ENCODE measurements at regions of chr1 and their contacts with region 1.

Region 1: GRCh38 chr1:56301847-56302246 is 277.5 kb downstream of the PLPP3 start:
- DNase-seq: peak; percentile 93
- H3K4me3 ChIP-seq: no peak overlapping the region
- H3K27ac ChIP-seq: no peak overlapping the region
- H3K4me1 ChIP-seq: peaks cover 17% of the 10 kb centered on the region
- H3K27me3 ChIP-seq: no peaks in the 10 kb centered on the region
- CTCF ChIP-seq: no peak
- POLR2A ChIP-seq: peak; percentile 41

Region 2: GRCh38 chr1:55428944-55429931 is 872.6 kb before region 1 on chr1:
- CTCF ChIA-PET with region 1: no interaction called
- POLR2A ChIA-PET with region 1: no interaction called
- dilution Hi-C with region 1: no loop called
- intact Hi-C with region 1: loop called (anchors 1 kb)
- DNase-seq: peak; percentile 99
- H3K4me3 ChIP-seq: no peak overlapping the region
- H3K27ac ChIP-seq: peak overlapping the region; percentile 93
- H3K4me1 ChIP-seq: peaks cover 32% of the 10 kb centered on the region
- H3K27me3 ChIP-seq: no peaks in the 10 kb centered on the region
- CTCF ChIP-seq: no peak
- POLR2A ChIP-seq: peak; percentile 54

Region 3: DNA sequence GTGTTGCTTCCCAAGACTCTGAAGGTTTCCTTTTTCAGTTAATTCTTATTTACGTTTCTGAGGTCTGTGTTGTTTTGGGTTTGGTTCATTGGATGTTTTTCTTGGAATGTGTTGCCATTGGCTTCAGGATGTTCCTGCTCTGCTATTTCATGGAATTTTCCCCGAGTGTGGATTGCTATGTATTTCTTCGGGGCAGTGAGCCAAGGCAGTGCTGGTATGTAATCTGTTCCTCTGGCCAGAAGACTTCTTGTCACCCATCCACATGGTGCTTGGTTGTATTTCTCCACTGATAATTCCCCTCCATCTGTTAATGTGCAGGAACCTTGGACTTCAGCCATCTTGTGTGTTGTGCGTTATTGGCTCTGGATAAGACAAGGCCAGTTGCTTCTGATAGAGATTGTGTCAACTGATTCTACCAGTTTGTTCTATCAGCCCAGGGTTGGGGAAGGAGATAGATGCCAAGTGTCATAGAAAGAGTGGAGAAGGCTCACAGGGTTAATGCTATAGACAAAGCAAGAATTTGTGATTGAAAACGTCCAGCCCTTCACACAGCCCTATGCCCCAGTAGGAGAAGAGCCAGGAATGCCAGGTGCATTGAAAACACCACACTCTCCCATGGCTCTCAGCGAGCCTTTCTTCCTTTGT is 227.7 kb before region 1 on chr1:
- CTCF ChIA-PET with region 1: no interaction called
- POLR2A ChIA-PET with region 1: no interaction called
- dilution Hi-C with region 1: no loop called
- intact Hi-C with region 1: loop called (anchors 5 kb)
- DNase-seq: peak; percentile 99
- H3K4me3 ChIP-seq: no peak overlapping the region
- H3K27ac ChIP-seq: peak overlapping the region; percentile 45
- H3K4me1 ChIP-seq: peaks cover 38% of the 10 kb centered on the region
- H3K27me3 ChIP-seq: no peaks in the 10 kb centered on the region
- CTCF ChIP-seq: no peak
- POLR2A ChIP-seq: no peak

Region 4: DNA sequence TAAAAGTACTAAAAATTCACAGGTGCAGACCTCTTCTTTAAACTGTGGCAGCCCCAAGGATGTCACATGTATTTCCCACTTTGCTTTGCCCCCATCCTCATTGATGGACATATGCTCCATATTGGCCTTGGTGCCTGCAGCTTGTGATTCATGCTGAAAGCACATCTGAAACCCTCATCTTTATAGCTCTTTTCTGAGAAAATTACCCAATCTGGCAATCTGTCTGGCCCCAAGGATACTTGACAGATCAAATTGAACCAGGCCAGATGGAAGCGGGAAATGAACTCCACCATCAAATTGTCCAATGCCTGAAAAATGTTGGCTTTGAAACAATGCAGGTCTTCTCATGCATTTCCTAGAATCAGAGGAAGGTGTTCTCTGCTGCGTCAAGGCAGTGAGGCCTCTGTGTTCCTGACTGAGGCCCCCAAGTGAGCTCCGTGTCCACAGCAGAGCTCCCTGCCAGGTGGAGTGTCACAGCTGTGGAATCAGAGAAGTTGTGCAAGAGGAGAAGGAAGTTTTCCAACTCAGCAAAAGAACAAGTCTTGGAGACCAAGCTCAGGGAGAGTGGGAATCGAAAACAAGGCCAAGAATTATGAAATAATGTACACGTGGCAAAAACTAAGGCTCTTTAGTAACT is 46.2 kb before region 1 on chr1:
- CTCF ChIA-PET with region 1: no interaction called
- POLR2A ChIA-PET with region 1: no interaction called
- dilution Hi-C with region 1: no loop called
- intact Hi-C with region 1: no loop called
- DNase-seq: no peak
- H3K4me3 ChIP-seq: no peak overlapping the region
- H3K27ac ChIP-seq: no peak overlapping the region
- H3K4me1 ChIP-seq: no peaks in the 10 kb centered on the region
- H3K27me3 ChIP-seq: no peaks in the 10 kb centered on the region
- CTCF ChIP-seq: no peak
- POLR2A ChIP-seq: no peak

Region 5: DNA sequence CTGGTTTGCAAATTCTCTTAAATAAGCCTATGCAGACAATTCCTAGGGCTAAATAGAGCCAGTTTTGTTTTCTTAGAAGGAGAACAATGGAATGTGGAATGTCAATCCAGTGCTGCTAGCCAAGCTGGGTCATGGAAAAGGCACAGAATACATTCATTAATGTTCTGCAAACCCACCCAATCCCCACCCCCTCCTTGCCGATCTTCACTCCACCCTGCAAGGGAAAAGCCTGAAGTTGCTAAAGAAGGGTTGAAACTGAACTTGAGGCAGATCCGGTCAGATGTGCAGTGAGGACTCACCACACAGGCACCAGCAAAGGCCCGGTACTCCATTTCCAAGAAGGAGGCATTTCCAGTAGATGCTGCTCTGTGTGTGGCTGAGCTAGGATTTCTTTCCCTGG is 97.9 kb after region 1 on chr1:
- CTCF ChIA-PET with region 1: no interaction called
- POLR2A ChIA-PET with region 1: no interaction called
- dilution Hi-C with region 1: no loop called
- intact Hi-C with region 1: no loop called
- DNase-seq: peak; percentile 65
- H3K4me3 ChIP-seq: no peak overlapping the region
- H3K27ac ChIP-seq: no peak overlapping the region
- H3K4me1 ChIP-seq: no peaks in the 10 kb centered on the region
- H3K27me3 ChIP-seq: no peaks in the 10 kb centered on the region
- CTCF ChIP-seq: no peak
- POLR2A ChIP-seq: no peak

Region 6: DNA sequence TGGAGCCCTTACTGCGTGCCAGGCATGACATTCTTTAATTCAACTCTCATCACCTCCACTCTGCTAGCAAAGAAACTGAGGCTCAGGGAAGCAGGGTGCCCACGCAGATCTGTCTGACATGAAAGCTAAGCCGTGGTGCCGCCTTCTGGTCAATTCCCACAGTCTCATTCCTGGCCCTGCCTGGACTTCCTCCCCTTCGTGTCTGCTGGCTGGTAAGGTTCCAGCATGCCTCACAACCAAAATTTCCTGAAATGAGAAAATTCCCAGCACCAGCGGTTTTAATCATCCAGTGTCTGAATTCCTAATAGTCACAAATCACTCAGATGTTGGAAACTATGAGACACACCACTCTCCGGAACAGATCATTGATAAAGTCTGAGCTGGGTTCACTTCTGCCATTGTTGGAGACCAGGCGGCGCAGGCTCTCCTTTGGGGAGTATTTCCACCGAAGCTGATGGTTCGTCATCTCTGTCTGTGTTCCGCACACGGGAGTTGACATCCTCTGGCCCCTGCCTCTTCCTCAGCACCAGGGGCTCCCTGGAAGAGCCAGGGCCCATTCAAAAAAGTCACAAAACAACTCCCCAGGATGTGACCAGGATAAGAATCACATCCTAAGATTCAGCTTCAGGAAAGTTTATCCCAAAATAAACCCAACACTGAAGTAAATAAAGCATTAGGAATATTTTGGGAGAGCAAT is 109.8 kb after region 1 on chr1:
- CTCF ChIA-PET with region 1: interaction called, 7 read pairs
- POLR2A ChIA-PET with region 1: no interaction called
- dilution Hi-C with region 1: no loop called
- intact Hi-C with region 1: loop called (anchors 2 kb)
- DNase-seq: peak; percentile 95
- H3K4me3 ChIP-seq: no peak overlapping the region
- H3K27ac ChIP-seq: peak overlapping the region; percentile 49
- H3K4me1 ChIP-seq: peaks cover 19% of the 10 kb centered on the region
- H3K27me3 ChIP-seq: no peaks in the 10 kb centered on the region
- CTCF ChIP-seq: peak; percentile 38 to 60
- POLR2A ChIP-seq: no peak

Region 7: DNA sequence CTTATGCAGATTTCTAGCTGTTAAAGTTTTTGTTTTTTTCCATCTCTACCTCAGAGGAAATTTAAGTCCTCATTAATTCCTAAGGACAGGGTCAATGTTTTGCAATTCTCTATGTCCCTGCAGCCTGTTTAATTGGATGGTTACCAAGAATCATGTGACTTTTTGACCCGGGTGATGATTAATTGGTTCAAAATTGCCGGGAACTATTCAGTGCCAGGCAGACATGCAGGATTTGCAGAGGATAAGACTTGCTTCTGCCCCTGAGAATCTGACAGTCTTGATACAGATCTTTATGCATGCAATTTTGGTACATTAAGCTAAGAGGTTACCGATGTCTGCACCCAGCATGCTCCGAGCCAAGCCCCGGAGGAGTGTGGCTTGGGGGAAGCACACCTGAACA is 189.6 kb after region 1 on chr1:
- CTCF ChIA-PET with region 1: no interaction called
- POLR2A ChIA-PET with region 1: no interaction called
- dilution Hi-C with region 1: no loop called
- intact Hi-C with region 1: loop called (anchors 5 kb)
- DNase-seq: peak; percentile 88
- H3K4me3 ChIP-seq: no peak overlapping the region
- H3K27ac ChIP-seq: no peak overlapping the region
- H3K4me1 ChIP-seq: peaks cover 24% of the 10 kb centered on the region
- H3K27me3 ChIP-seq: no peaks in the 10 kb centered on the region
- CTCF ChIP-seq: no peak
- POLR2A ChIP-seq: no peak